ENCODE measurements at regions of chr4 and their contacts with region 1.

Region 1: GRCh38 chr4:16794816-16795445 is 103.5 kb downstream of the LDB2 start:
- DNase-seq: peak; percentile 10 to 89
- H3K4me3 ChIP-seq: no peak overlapping the region
- H3K27ac ChIP-seq: no peak overlapping the region
- H3K4me1 ChIP-seq: peaks cover 0 to 16% (median 4%) of the 10 kb centered on the region in 4 experiments; a peak in 6 of 7 replicates
- H3K27me3 ChIP-seq: no peaks in the 10 kb centered on the region
- CTCF ChIP-seq: peak; percentile 58 to 94 (median 79)
- EP300 ChIP-seq: no peak
- POLR2A ChIP-seq: no peak
- RAD21 ChIP-seq: peak; percentile 85 to 90

Region 2: DNA sequence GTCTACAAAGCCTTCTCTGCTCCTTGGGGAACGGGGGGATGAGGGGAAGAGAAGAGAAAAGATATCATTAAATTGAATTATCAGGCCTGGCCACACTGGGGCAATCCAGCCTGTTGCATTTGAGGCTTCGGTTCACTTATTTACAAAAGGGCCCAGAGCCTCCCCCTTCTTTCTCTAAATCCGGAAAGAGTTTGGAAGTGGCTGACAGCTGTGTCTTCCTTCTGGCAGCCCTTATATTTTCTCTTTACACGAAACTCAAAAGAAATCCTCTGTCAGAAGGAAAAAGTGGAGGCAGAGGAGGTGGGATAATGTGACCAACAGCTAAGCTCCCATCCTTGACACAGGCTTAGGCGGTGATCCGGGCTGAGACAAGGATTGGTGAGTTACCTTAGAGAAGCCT is 410.4 kb before region 1 on chr4:
- CTCF ChIA-PET with region 1: no interaction called
- POLR2A ChIA-PET with region 1: no interaction called
- DNase-seq: no peak
- H3K4me3 ChIP-seq: no peak overlapping the region
- H3K27ac ChIP-seq: no peak overlapping the region
- H3K4me1 ChIP-seq: no peaks in the 10 kb centered on the region
- H3K27me3 ChIP-seq: no peaks in the 10 kb centered on the region
- CTCF ChIP-seq: no peak
- EP300 ChIP-seq: no peak
- POLR2A ChIP-seq: no peak
- RAD21 ChIP-seq: peak in 1 of 2 experiments; percentile 9; a peak in 1 of 4 replicates

Region 3: GRCh38 chr4:16642895-16643294 is 152.0 kb before region 1 on chr4:
- CTCF ChIA-PET with region 1: no interaction called
- POLR2A ChIA-PET with region 1: no interaction called
- DNase-seq: no peak
- H3K4me3 ChIP-seq: no peak overlapping the region
- H3K27ac ChIP-seq: no peak overlapping the region
- H3K4me1 ChIP-seq: no peaks in the 10 kb centered on the region
- H3K27me3 ChIP-seq: no peaks in the 10 kb centered on the region
- CTCF ChIP-seq: no peak
- EP300 ChIP-seq: no peak
- POLR2A ChIP-seq: no peak
- RAD21 ChIP-seq: peak in 1 of 2 experiments; percentile 8; a peak in 1 of 4 replicates

Region 4: GRCh38 chr4:16754104-16754503 is 40.8 kb before region 1 on chr4:
- CTCF ChIA-PET with region 1: no interaction called
- POLR2A ChIA-PET with region 1: no interaction called
- DNase-seq: no peak
- H3K4me3 ChIP-seq: no peak overlapping the region
- H3K27ac ChIP-seq: no peak overlapping the region
- H3K4me1 ChIP-seq: peaks cover 0 to 5% (median 4%) of the 10 kb centered on the region in 4 experiments; a peak in 4 of 7 replicates
- H3K27me3 ChIP-seq: no peaks in the 10 kb centered on the region
- CTCF ChIP-seq: no peak
- EP300 ChIP-seq: no peak
- POLR2A ChIP-seq: no peak
- RAD21 ChIP-seq: no peak

Region 5: GRCh38 chr4:16764622-16765021 is 30.3 kb before region 1 on chr4:
- CTCF ChIA-PET with region 1: interaction called, 13 read pairs
- POLR2A ChIA-PET with region 1: no interaction called
- DNase-seq: peak in 1 of 2 experiments; percentile 54
- H3K4me3 ChIP-seq: no peak overlapping the region
- H3K27ac ChIP-seq: no peak overlapping the region
- H3K4me1 ChIP-seq: peaks cover 0 to 9% (median 1%) of the 10 kb centered on the region in 4 experiments; a peak in 2 of 7 replicates
- H3K27me3 ChIP-seq: no peaks in the 10 kb centered on the region
- CTCF ChIP-seq: peak; percentile 64 to 81 (median 73)
- EP300 ChIP-seq: no peak
- POLR2A ChIP-seq: no peak
- RAD21 ChIP-seq: peak; percentile 85 to 90

Region 6: GRCh38 chr4:16807355-16807754 is 12.4 kb after region 1 on chr4:
- CTCF ChIA-PET with region 1: interaction called, 18 read pairs
- POLR2A ChIA-PET with region 1: interaction called, 4 read pairs
- DNase-seq: no peak
- H3K4me3 ChIP-seq: no peak overlapping the region
- H3K27ac ChIP-seq: no peak overlapping the region
- H3K4me1 ChIP-seq: no peaks in the 10 kb centered on the region
- H3K27me3 ChIP-seq: no peaks in the 10 kb centered on the region
- CTCF ChIP-seq: no peak
- EP300 ChIP-seq: no peak
- POLR2A ChIP-seq: no peak
- RAD21 ChIP-seq: no peak

Region 7: GRCh38 chr4:16820329-16820728 is 25.4 kb after region 1 on chr4:
- CTCF ChIA-PET with region 1: interaction called, 10 read pairs
- POLR2A ChIA-PET with region 1: no interaction called
- DNase-seq: no peak
- H3K4me3 ChIP-seq: no peak overlapping the region
- H3K27ac ChIP-seq: peak overlapping the region; percentile 31; the same call in 1 of the 2 replicates
- H3K4me1 ChIP-seq: peaks cover 3 to 16% (median 11%) of the 10 kb centered on the region in 4 experiments; a peak in 6 of 7 replicates
- H3K27me3 ChIP-seq: no peaks in the 10 kb centered on the region
- CTCF ChIP-seq: no peak
- EP300 ChIP-seq: no peak
- POLR2A ChIP-seq: no peak
- RAD21 ChIP-seq: no peak

Region 8: GRCh38 chr4:16909281-16909680 is 114.3 kb after region 1 on chr4:
- CTCF ChIA-PET with region 1: interaction called, 13 read pairs
- POLR2A ChIA-PET with region 1: no interaction called
- DNase-seq: no peak
- H3K4me3 ChIP-seq: peak overlapping the region in 1 of 4 experiments; percentile 20; a peak in 1 of 8 replicates
- H3K27ac ChIP-seq: no peak overlapping the region
- H3K4me1 ChIP-seq: peaks cover 5 to 13% (median 8%) of the 10 kb centered on the region in 4 experiments
- H3K27me3 ChIP-seq: no peaks in the 10 kb centered on the region
- CTCF ChIP-seq: no peak
- EP300 ChIP-seq: no peak
- POLR2A ChIP-seq: no peak
- RAD21 ChIP-seq: no peak

Region 9: GRCh38 chr4:16916719-16917337 is 121.9 kb after region 1 on chr4:
- CTCF ChIA-PET with region 1: interaction called, 15 read pairs
- POLR2A ChIA-PET with region 1: no interaction called
- DNase-seq: peak; percentile 90 to 94
- H3K4me3 ChIP-seq: no peak overlapping the region
- H3K27ac ChIP-seq: no peak overlapping the region
- H3K4me1 ChIP-seq: peaks cover 0 to 10% (median 4%) of the 10 kb centered on the region in 4 experiments; a peak in 6 of 7 replicates
- H3K27me3 ChIP-seq: no peaks in the 10 kb centered on the region
- CTCF ChIP-seq: peak; percentile 93 to 99 (median 97)
- EP300 ChIP-seq: 0 out of 3 replicates have a peak, but pooled peaks of 1 of the 2 experiments have one; percentile 53
- POLR2A ChIP-seq: no peak
- RAD21 ChIP-seq: peak; percentile 87 to 94

Region 10: GRCh38 chr4:17324386-17324830 is 529.5 kb after region 1 on chr4:
- CTCF ChIA-PET with region 1: interaction called, 24 read pairs
- POLR2A ChIA-PET with region 1: no interaction called
- DNase-seq: peak in 1 of 2 experiments; percentile 72
- H3K4me3 ChIP-seq: no peak overlapping the region
- H3K27ac ChIP-seq: no peak overlapping the region
- H3K4me1 ChIP-seq: peaks cover 0 to 7% (median 3%) of the 10 kb centered on the region in 4 experiments; a peak in 1 of 7 replicates
- H3K27me3 ChIP-seq: 0 out of 7 replicates have a peak, but pooled peaks cover 0 to 3% (median 0%) of the 10 kb centered on the region in 4 experiments
- CTCF ChIP-seq: peak in 2 of 3 experiments; percentile 46 to 67; a peak in 3 of 4 replicates
- EP300 ChIP-seq: no peak
- POLR2A ChIP-seq: no peak
- RAD21 ChIP-seq: peak; percentile 91